PC-3 (cell line): ENCODE measurements at regions of chr1 and their contacts with region 1.

Region 1: DNA sequence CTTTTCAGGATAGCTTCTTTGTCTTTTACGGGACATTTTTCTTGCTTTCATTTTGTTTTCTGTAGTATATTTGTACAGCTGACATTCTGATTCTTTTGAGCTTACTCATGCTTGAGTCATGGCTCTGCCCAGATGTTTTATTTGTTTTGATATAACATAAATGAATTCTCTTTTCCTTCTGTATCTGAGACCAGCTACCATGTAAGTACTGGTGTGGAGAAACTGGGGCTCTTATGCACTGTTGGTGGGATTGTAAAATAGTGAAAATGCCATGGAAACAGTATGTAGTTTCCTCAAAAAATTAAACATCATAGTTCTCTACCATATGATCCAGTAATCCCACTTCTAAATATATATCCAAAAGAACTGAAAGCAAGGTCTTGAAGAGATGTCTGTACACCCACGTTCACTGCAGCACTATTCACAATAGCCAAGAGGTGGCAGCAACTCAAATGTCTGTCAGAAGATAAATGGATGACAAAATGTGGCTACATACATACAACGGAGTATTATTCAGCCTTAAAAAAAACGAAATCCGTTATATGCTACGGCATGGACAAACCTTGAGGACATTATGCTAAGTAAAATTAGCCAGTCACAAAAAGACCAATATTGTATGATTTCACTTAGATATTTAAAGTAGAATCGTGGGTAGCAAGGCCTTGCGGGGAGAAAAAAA is 61.4 kb downstream of the EIF2B3 start:
- DNase-seq: peak; percentile 85
- ATAC-seq: peak; percentile 94
- H3K4me3 ChIP-seq: peak overlapping the region; percentile 50; the same call in 1 of the 2 replicates
- H3K27ac ChIP-seq: peak overlapping the region; percentile 30
- H3K4me1 ChIP-seq: peaks cover 14% of the 10 kb centered on the region
- H3K27me3 ChIP-seq: no peaks in the 10 kb centered on the region
- CTCF ChIP-seq: peak; percentile 55

Region 2: GRCh38 chr1:44835738-44836675 is 89.0 kb before region 1 on chr1:
- CTCF ChIA-PET with region 1: no interaction called
- POLR2A ChIA-PET with region 1: no interaction called
- intact Hi-C with region 1: loop called (anchors 10 kb)
- DNase-seq: peak; percentile 85
- ATAC-seq: peak; percentile 93
- H3K4me3 ChIP-seq: no peak overlapping the region
- H3K27ac ChIP-seq: no peak overlapping the region
- H3K4me1 ChIP-seq: no peaks in the 10 kb centered on the region
- H3K27me3 ChIP-seq: no peaks in the 10 kb centered on the region
- CTCF ChIP-seq: peak; percentile 91

Region 3: DNA sequence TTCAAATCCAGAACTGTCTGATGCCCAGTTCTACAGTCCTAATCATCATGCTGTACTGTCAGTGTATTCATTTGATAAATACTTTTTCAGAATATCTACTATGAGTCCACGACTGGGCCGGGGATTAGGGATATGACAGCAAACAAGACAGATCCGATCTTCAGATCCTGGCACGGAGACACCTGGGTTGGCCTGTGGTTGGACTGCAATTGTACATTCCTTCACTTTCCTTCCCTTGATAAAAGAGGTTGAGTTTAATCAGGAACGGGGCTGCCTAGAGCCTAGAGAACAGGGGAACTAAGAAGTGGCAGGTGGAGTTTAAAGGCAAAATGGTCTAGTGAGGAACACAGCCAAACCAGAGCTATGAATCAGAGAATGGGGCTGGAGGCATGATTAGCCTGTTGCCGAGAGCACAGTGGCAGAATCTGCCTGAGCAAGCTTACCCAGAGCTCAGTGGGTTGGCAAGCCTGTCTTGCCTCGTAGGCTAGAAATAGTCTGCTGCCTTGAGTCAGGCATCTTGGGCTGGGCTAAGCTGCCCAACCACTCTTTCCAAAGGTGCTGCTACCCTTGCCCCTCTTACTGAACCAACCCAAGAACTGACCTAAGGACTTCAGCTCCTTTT is 43.9 kb before region 1 on chr1:
- CTCF ChIA-PET with region 1: no interaction called
- POLR2A ChIA-PET with region 1: no interaction called
- intact Hi-C with region 1: no loop called
- DNase-seq: peak; percentile 41
- ATAC-seq: peak; percentile 38
- H3K4me3 ChIP-seq: no peak overlapping the region
- H3K27ac ChIP-seq: no peak overlapping the region
- H3K4me1 ChIP-seq: no peaks in the 10 kb centered on the region
- H3K27me3 ChIP-seq: no peaks in the 10 kb centered on the region
- CTCF ChIP-seq: no peak

Region 4: GRCh38 chr1:44970317-44970716 is 45.3 kb after region 1 on chr1:
- CTCF ChIA-PET with region 1: no interaction called
- POLR2A ChIA-PET with region 1: no interaction called
- intact Hi-C with region 1: loop called (anchors 2 kb)
- DNase-seq: peak; percentile 80
- ATAC-seq: peak; percentile 95
- H3K4me3 ChIP-seq: no peak overlapping the region
- H3K27ac ChIP-seq: peak overlapping the region; percentile 45
- H3K4me1 ChIP-seq: peaks cover 20% of the 10 kb centered on the region
- H3K27me3 ChIP-seq: no peaks in the 10 kb centered on the region
- CTCF ChIP-seq: no peak

Region 5: GRCh38 chr1:44985747-44986359 is 60.9 kb after region 1 on chr1:
- CTCF ChIA-PET with region 1: no interaction called
- POLR2A ChIA-PET with region 1: no interaction called
- intact Hi-C with region 1: loop called (anchors 2 kb)
- DNase-seq: no peak
- ATAC-seq: peak; percentile 19
- H3K4me3 ChIP-seq: peak overlapping the region; percentile 82
- H3K27ac ChIP-seq: 0 out of 2 replicates have a peak overlapping the region, but pooled peaks have one; percentile 5
- H3K4me1 ChIP-seq: peaks cover 3% of the 10 kb centered on the region; the same call in 1 of the 2 replicates
- H3K27me3 ChIP-seq: no peaks in the 10 kb centered on the region
- CTCF ChIP-seq: no peak